ENCODE measurements at regions of chr4 and their contacts with region 1.

Region 1: DNA sequence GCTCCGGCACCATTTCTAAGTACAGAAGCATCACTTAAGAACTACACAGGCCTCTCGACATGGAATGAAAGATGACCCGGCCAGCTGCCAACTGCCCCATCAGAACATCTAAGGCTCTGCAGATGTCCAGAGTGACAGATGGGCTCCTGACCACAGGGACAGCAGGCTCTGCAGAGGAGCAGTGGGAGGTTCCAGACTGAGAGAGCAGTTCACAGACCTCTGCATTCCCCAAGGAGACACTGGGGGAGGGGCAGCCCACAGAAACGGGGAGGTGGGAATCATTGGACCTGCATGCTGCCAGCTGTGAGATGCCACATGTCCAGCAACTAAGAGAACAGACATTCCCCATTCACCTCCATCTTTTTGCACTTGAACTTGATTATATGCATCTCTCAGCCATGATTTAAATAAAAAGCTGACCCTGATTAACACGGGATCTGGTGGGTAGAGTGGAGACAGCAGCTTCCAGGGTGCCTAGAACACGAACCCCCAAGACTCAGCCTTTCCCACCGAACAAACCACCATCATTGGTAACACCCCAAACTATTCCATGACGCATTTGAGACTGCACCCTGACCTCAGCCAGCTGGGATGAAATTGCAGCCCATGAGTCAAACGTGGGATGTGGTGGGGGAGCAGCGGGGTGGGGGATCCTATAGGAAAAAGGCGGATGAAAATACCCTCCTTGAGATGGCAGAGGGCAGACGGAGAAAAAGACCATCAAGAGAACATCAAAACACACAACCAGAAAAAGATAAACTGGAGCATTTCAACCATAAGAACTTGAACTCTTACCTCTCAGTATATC is 47.2 kb downstream of the AFAP1 start:
- DNase-seq: peak; percentile 62
- H3K4me3 ChIP-seq: 0 out of 4 replicates have a peak overlapping the region, but pooled peaks of 1 of the 2 experiments have one; percentile 30
- H3K27ac ChIP-seq: peak overlapping the region; percentile 97 to 98
- H3K4me1 ChIP-seq: peaks cover 58 to 59% of the 10 kb centered on the region in 2 experiments
- H3K27me3 ChIP-seq: no peaks in the 10 kb centered on the region
- CTCF ChIP-seq: no peak
- EP300 ChIP-seq: peak in 1 of 2 experiments; percentile 93; a peak in 2 of 4 replicates
- RAD21 ChIP-seq: no peak; the same call in 1 of the 2 replicates

Region 2: DNA sequence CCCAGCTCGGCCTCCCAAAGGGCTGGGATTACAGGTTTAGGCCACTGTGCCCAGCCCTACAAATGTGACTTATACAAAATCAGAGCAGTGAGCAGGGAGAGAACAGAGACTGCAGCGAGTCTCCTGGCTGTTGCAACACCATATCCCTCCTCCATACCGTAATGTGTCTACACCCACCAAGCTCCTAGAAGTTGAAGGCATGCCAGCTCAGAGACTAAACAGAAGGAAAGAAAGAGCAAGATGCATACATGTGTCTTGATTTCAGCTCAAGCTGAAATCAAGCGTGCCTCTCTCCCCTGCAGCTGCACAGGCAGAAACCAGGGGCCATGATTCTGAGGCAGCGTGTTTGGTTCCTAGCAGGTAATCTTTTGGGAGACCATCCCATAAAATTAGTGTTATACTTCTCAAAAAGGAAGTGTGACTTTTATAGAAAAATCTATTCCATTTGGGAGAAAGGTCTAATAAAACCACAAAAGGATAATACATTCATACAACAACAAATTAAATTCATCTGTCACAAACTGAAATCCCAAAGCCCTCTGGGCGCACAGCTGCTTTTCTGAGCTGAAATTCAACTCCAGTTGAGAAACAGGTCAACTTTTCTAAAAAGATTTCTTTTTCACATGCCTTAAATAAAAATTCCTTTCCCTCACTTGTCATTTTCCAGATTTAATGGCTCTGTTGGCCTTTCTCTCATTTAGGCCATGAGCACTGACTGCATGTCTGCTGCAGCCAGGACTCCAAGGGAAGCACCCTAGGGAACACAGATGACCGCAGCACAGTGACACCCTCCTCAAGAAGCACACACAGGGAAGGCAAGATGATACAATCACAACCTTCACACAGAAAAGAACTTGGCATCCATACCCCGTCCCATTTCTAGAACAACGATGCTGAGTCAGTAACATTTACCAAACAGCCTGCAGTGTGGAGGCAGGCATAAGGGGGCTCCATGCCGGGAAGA is 12.8 kb after region 1 on chr4:
- CTCF ChIA-PET with region 1: interaction called, 13 read pairs
- POLR2A ChIA-PET with region 1: interaction called, 8 read pairs
- DNase-seq: no peak
- H3K4me3 ChIP-seq: peak overlapping the region; percentile 14 to 38; a peak in 3 of 4 replicates
- H3K27ac ChIP-seq: peak overlapping the region; percentile 97 to 100
- H3K4me1 ChIP-seq: peaks cover 84 to 88% of the 10 kb centered on the region in 2 experiments
- H3K27me3 ChIP-seq: no peaks in the 10 kb centered on the region
- CTCF ChIP-seq: no peak
- EP300 ChIP-seq: peak in 1 of 2 experiments; percentile 50; a peak in 1 of 4 replicates
- RAD21 ChIP-seq: no peak

Measured in SK-N-SH (cell line).